ENCODE measurements at regions of chr19 and their contacts with region 1.

Region 1: GRCh38 chr19:4968462-4969291 is at the start of gene KDM4B:
- DNase-seq: peak; percentile 98
- ATAC-seq: peak; percentile 92
- H3K4me3 ChIP-seq: peak within 1 kb of the TSS; percentile 67 to 76
- H3K27ac ChIP-seq: peak within 1 kb of the TSS; percentile 76
- H3K4me1 ChIP-seq: peaks cover 44 to 64% of the 10 kb centered on the region in 2 experiments
- H3K27me3 ChIP-seq: no peaks in the 10 kb centered on the region
- CTCF ChIP-seq: no peak
- POLR2A ChIP-seq: peak; percentile 78
- RAD21 ChIP-seq: no peak
- total RNA-seq, gene KDM4B: 35.9 TPM

Region 2: GRCh38 chr19:4867534-4868285 is 101.0 kb before region 1 on chr19 and contains the start of gene PLIN3:
- CTCF ChIA-PET with region 1: interaction called, 5 read pairs
- POLR2A ChIA-PET with region 1: interaction called, 14 read pairs
- RAD21 ChIA-PET with region 1: no interaction called
- intact Hi-C with region 1: loop called (anchors 5 kb)
- DNase-seq: peak; percentile 88
- ATAC-seq: peak; percentile 72
- H3K4me3 ChIP-seq: peak within 1 kb of the TSS; percentile 94 to 96
- H3K27ac ChIP-seq: peak within 1 kb of the TSS; percentile 95
- H3K4me1 ChIP-seq: peaks cover 49 to 76% of the 10 kb centered on the region in 2 experiments
- H3K27me3 ChIP-seq: no peaks in the 10 kb centered on the region
- CTCF ChIP-seq: no peak
- POLR2A ChIP-seq: no peak
- RAD21 ChIP-seq: no peak
- total RNA-seq, gene PLIN3: 207 TPM

Region 3: GRCh38 chr19:4929186-4929585 is 39.5 kb before region 1 on chr19:
- CTCF ChIA-PET with region 1: no interaction called
- POLR2A ChIA-PET with region 1: no interaction called
- RAD21 ChIA-PET with region 1: no interaction called
- intact Hi-C with region 1: no loop called
- DNase-seq: no peak
- ATAC-seq: no peak
- H3K4me3 ChIP-seq: no peak overlapping the region
- H3K27ac ChIP-seq: no peak overlapping the region
- H3K4me1 ChIP-seq: peaks cover 7 to 22% of the 10 kb centered on the region in 2 experiments
- H3K27me3 ChIP-seq: no peaks in the 10 kb centered on the region
- CTCF ChIP-seq: no peak
- POLR2A ChIP-seq: no peak
- RAD21 ChIP-seq: no peak

Region 4: DNA sequence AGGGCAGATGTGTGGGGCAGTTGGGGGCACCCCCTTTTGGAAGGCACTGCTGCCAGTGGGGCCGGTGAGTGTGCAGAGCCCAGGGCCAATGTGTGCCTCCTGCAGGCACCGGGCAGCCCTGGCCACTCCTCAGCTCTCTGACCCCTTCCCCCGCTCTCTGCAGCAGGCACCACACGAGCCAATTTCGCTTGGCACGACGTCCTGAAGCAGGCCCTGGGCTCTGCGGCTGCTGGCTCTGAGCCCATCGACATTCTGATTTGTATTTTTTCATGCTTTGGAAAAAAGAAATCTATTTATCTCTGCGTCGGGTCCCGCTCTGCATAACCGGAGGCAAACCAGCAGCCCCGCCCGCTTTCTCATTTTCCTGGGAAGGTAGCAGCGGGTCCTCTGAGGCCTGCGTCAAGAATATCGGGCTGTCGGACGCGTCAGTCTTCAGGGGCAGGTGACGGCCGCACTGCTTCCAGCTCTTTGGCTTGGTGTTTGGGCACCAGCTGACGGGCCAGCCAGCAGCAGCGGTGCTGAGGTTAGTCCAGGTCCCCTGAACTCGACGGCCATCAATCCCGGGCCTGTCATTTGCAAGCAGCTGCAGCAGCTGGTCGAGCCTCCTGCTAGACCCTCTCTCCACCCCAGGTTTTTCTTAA is 134.5 kb after region 1 on chr19:
- CTCF ChIA-PET with region 1: no interaction called
- POLR2A ChIA-PET with region 1: no interaction called
- RAD21 ChIA-PET with region 1: no interaction called
- intact Hi-C with region 1: no loop called
- DNase-seq: no peak
- ATAC-seq: no peak
- H3K4me3 ChIP-seq: no peak overlapping the region
- H3K27ac ChIP-seq: no peak overlapping the region
- H3K4me1 ChIP-seq: no peaks in the 10 kb centered on the region
- H3K27me3 ChIP-seq: no peaks in the 10 kb centered on the region
- CTCF ChIP-seq: no peak
- POLR2A ChIP-seq: no peak
- RAD21 ChIP-seq: no peak

Region 5: GRCh38 chr19:5186293-5187050 is 217.8 kb after region 1 on chr19:
- CTCF ChIA-PET with region 1: no interaction called
- POLR2A ChIA-PET with region 1: no interaction called
- RAD21 ChIA-PET with region 1: no interaction called
- intact Hi-C with region 1: no loop called
- DNase-seq: no peak
- ATAC-seq: no peak
- H3K4me3 ChIP-seq: no peak overlapping the region
- H3K27ac ChIP-seq: no peak overlapping the region
- H3K4me1 ChIP-seq: peaks cover 3 to 7% of the 10 kb centered on the region in 2 experiments; a peak in 3 of 4 replicates
- H3K27me3 ChIP-seq: no peaks in the 10 kb centered on the region
- CTCF ChIP-seq: no peak
- POLR2A ChIP-seq: no peak
- RAD21 ChIP-seq: no peak

Region 6: GRCh38 chr19:5292822-5293611 is 324.3 kb after region 1 on chr19:
- CTCF ChIA-PET with region 1: no interaction called
- POLR2A ChIA-PET with region 1: no interaction called
- RAD21 ChIA-PET with region 1: no interaction called
- intact Hi-C with region 1: no loop called
- DNase-seq: no peak
- ATAC-seq: peak; percentile 89
- H3K4me3 ChIP-seq: peak overlapping the region; percentile 57 to 69
- H3K27ac ChIP-seq: peak overlapping the region; percentile 81; the same call in 1 of the 2 replicates
- H3K4me1 ChIP-seq: peaks cover 3 to 16% of the 10 kb centered on the region in 2 experiments; a peak in 3 of 4 replicates
- H3K27me3 ChIP-seq: no peaks in the 10 kb centered on the region
- CTCF ChIP-seq: no peak
- POLR2A ChIP-seq: peak; percentile 39
- RAD21 ChIP-seq: no peak

Measured in HCT116 (cell line).